Mucosa of descending colon (tissue), 3 donors: ENCODE measurements at regions of chr4 and their contacts with region 1.

Region 1: DNA sequence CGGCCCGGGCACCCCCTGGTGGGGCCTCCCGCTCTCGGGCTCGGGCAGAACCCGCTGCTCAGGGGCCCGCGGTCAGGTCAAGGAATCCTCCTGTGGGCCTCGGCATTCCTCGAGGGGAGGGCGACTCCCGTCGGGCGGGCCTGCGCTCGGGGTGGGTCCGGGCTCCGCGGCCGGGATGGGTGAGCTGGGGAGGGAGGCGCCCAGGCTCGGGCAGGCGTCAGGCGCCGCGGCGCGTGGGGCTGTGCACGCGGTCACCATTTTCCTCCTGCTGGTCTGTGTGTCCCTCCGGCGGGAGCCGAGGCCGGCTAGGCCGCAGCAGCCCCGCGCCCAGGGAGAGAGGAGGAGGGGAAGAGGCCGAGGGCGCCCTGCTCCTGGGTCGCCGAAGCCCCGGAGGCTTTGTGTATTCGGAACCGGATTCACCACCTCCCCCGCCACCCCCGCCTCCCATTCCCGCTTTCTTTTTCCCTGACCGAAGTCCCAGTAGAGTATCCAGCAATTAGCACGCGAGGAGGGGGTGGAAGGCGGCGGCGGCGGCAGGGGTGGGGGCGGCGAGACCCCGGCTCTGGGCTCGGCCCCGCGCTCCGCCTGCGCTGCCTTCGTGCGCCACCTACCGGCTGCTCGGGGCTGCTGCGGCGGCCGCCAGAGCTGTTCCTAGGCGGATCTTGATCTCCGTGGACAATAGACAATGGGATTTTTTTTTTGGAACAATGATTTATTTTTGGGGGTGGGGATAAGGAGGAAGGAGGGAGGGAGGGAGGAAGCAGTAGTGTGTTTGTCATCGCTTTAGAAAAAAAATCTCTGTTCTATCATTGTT is 99.0 kb upstream of the MAML3 start:
- DNase-seq: peak; percentile 82 to 86 (median 82)
- ATAC-seq: peak; percentile 90
- H3K4me3 ChIP-seq: peak overlapping the region; percentile 12
- H3K4me1 ChIP-seq: peaks cover 3% of the 10 kb centered on the region
- CTCF ChIP-seq: peak; percentile 94

Region 2: DNA sequence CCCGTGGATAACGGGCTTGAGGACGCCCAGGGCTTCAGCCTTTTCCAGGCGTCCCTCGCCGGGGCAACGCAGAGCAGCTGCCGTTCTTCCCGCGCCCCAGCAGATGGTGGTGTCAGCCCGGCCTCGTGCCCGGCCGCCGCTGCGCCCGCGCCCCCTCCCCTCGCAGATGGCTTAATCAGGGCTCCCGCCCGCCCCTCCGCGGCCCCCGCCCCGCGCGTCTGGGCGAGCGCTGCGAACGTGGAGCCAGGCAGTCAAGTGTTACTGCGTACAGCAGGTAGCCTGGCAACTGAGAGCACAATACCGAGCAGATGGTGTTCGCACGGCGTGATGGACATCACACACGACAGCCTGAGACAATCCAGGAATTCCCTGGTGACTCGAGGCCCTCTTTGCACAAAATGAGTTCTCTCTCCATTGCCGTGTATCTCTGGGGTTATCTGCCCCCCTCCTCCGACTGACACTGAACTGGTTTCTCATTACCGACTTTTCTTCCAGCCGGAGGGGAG is 518.0 kb before region 1 on chr4:
- intact Hi-C with region 1: loop called in 1 of 2 experiments (anchors 5 kb)
- DNase-seq: peak; percentile 63 to 83 (median 77)
- ATAC-seq: peak; percentile 92
- H3K4me3 ChIP-seq: no peak overlapping the region
- H3K4me1 ChIP-seq: peaks cover 10% of the 10 kb centered on the region
- CTCF ChIP-seq: peak; percentile 25

Region 3: GRCh38 chr4:140012688-140013486 is 240.1 kb before region 1 on chr4:
- intact Hi-C with region 1: loop called in 1 of 2 experiments (anchors 5 kb)
- DNase-seq: peak in 2 of 3 donors; percentile 67 to 90
- ATAC-seq: peak; percentile 99
- H3K4me3 ChIP-seq: no peak overlapping the region
- H3K4me1 ChIP-seq: no peaks in the 10 kb centered on the region
- CTCF ChIP-seq: peak; percentile 24

Region 4: DNA sequence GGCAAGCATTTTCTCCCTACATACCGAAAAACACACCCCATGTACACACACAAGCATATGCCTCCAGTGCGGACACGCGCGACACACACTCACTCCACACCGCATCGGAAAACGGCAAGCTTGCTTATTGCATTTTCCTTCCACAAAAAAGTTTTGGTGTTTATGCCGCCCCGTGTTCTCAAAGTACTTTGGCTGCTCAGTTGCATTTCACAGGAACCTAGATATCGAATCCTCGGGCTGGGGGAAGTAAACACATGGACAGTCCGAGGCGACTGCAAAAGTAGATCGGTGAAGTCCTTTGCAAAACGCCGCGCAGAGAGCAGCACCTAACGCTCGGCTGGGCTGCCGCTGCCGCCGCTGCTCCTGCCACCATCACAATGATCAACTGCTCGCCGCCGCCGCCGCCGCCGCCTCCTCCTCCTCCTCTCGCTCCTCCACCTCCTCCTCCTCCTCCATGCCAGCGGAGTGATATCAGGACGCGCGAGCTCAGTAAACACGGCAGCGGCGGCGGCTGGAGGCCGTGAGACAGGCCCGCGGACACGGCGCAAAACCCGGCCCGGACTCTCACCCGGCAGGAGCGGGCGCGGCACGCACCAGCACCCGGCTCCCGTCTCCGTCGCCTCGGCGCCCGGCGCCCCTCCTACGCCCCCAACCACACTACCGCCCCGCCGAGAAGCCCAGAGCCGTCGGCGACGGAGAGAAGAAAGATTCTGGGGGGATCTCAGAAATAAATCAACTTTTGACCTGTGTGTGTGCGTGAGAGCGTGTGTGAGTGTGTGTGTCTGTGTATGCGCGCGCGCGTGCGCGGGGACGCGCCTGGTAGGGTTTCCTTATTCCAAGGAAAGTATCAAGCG is 99.0 kb before region 1 on chr4 and contains the start of gene MAML3:
- intact Hi-C with region 1: loop called (anchors 5 kb)
- DNase-seq: peak; percentile 96 to 97 (median 96)
- ATAC-seq: peak; percentile 72
- H3K4me3 ChIP-seq: peak within 1 kb of the TSS; percentile 67
- H3K4me1 ChIP-seq: peaks cover 13% of the 10 kb centered on the region
- CTCF ChIP-seq: no peak
- total RNA-seq, gene MAML3: 10.4 to 23.5 (median 14.8) TPM

Region 5: GRCh38 chr4:140335076-140335475 is 82.1 kb after region 1 on chr4:
- intact Hi-C with region 1: no loop called
- DNase-seq: no peak
- ATAC-seq: no peak
- H3K4me3 ChIP-seq: no peak overlapping the region
- H3K4me1 ChIP-seq: no peaks in the 10 kb centered on the region
- CTCF ChIP-seq: no peak